ENCODE measurements at regions of chr21 and their contacts with region 1.

Region 1: DNA sequence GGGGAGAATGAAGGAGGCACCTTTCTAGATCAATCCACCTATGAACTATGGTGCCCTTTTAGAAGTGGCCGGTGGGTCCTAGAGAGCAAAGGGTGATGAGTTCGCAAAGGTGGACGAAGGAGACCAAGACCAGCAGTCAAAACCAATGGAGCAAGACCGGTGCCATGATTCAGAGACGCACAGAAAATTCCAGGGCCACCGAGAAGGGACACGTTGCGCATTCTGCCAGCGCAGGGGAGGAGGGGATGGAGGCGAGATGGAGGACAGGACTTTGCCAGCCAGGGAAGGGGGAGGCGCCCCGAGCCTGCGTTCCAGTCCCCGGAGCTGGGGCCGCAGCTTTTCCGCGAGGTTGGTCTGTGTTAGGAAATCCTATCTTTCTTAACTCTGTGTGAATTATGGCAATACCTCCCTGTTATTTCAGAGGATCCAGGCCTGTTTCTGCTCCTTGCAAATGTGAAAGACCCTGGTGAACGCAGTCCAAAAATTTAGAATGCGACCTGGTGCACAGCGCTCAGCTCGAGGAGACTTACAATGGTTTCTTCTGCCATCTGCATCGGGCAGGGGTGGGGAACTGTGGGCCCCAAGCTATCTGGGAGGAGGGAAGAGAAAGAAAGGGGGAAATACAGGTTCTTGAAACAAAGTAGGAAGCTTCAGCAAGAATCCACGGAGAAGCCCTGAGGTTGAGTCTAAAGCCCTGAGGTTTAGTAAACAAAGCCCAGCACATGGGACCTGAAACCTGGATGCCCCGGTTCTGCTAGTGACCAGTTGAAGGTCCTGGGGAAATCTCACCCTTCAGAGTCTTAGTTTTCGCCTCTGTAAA is 129.4 kb downstream of the MRPS6 start:
- DNase-seq: peak; percentile 24 to 77 (median 52)
- H3K4me3 ChIP-seq: peak overlapping the region; percentile 40 to 76 (median 57)
- H3K4me3 Mint-ChIP-seq: peak overlapping the region; percentile 76 to 90
- H3K27ac ChIP-seq: peak overlapping the region; percentile 84 to 92
- H3K27ac Mint-ChIP-seq: peak overlapping the region; percentile 98 to 99 (median 99)
- H3K4me1 ChIP-seq: peaks cover 90 to 98% of the 10 kb centered on the region in 2 donors
- H3K4me1 Mint-ChIP-seq: peaks cover 93% of the 10 kb centered on the region
- H3K27me3 ChIP-seq: no peaks in the 10 kb centered on the region
- H3K27me3 Mint-ChIP-seq: peaks cover 0 to 2% (median 0%) of the 10 kb centered on the region in 3 donors
- CTCF ChIP-seq: no peak

Region 2: GRCh38 chr21:33915368-33916199 is 287.2 kb before region 1 on chr21 and contains the start of gene ATP5PO:
- intact Hi-C with region 1: loop called (anchors 5 to 10 kb)
- DNase-seq: peak; percentile 94 to 99 (median 95)
- H3K4me3 ChIP-seq: peak within 1 kb of the TSS; percentile 63 to 91 (median 90)
- H3K4me3 Mint-ChIP-seq: peak within 1 kb of the TSS; percentile 96 to 99
- H3K27ac ChIP-seq: peak within 1 kb of the TSS; percentile 65 to 95
- H3K27ac Mint-ChIP-seq: peak within 1 kb of the TSS; percentile 87 to 99 (median 97)
- H3K4me1 ChIP-seq: peaks cover 12 to 19% of the 10 kb centered on the region in 2 donors
- H3K4me1 Mint-ChIP-seq: peaks cover 16% of the 10 kb centered on the region
- H3K27me3 ChIP-seq: no peaks in the 10 kb centered on the region
- H3K27me3 Mint-ChIP-seq: peaks cover 0 to 4% (median 4%) of the 10 kb centered on the region in 3 donors
- CTCF ChIP-seq: no peak
- polyA plus RNA-seq, gene ATP5PO: 153 to 397 (median 393) TPM

Region 3: DNA sequence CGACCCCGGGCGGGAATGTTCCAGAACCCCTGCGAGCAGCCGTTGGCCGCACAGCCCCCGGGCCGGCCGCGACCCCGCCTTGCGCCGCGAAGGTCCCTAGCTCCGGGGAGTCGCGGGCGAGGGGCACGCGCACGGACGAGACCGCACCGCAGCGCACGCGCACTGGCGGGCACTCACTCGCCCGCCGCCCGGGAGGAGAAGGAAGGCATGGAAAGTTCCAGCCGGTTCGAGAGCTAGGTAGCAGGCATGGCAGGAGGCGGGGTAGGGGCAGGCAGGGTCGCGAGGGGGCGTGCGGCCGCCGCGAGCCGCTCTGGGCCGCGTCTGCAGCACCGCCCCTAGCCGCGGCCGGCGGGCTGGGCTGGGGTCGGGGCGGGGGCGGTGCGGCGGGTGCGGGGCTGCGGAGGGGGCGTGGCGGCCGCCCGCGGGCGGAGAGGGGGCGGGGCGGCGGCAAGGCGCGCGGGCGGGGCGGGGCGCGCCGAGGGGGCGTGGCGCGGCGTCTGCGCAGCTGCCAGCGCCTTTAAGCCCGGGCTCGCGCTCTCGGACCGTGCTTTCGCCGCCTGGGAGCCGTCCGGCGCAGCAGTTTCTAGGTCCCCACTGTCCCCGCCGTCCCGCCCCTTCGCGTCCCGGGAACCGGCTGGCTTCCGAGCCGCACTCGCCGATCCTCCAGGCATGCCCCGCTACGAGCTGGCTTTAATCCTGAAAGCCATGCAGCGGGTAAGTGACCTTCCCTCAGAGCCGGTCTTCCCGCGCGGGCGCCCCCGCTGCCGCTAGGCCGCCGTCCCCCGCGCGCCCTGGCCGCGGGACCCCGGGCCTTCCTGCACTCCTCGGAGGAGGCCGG is 129.5 kb before region 1 on chr21 and contains the starts of genes MRPS6 and SLC5A3:
- intact Hi-C with region 1: loop called in 1 of 2 experiments (anchors 5 kb)
- DNase-seq: peak; percentile 76 to 78 (median 76)
- H3K4me3 ChIP-seq: peak within 1 kb of the TSS; percentile 70 to 99 (median 82)
- H3K4me3 Mint-ChIP-seq: peak within 1 kb of the TSS; percentile 92 to 96
- H3K27ac ChIP-seq: peak within 1 kb of the TSS; percentile 65 to 71
- H3K27ac Mint-ChIP-seq: peak within 1 kb of the TSS; percentile 67 to 88 (median 83)
- H3K4me1 ChIP-seq: peaks cover 25 to 35% of the 10 kb centered on the region in 2 donors
- H3K4me1 Mint-ChIP-seq: peaks cover 37% of the 10 kb centered on the region
- H3K27me3 ChIP-seq: no peaks in the 10 kb centered on the region
- H3K27me3 Mint-ChIP-seq: peaks cover 2 to 5% (median 3%) of the 10 kb centered on the region in 3 donors
- CTCF ChIP-seq: no peak
- polyA plus RNA-seq, gene MRPS6: 29.8 to 124 (median 101) TPM
- polyA plus RNA-seq, gene SLC5A3: 1.2 to 3.3 (median 1.6) TPM

Measured in CD14-positive monocyte (primary cell).